OCI-LY7 (cell line): ENCODE measurements at regions of chr11 and their contacts with region 1.

Region 1: GRCh38 chr11:128624269-128625175 is 37.2 kb upstream of the ETS1 start:
- DNase-seq: peak; percentile 90
- H3K4me3 ChIP-seq: peak overlapping the region; percentile 46
- H3K27ac ChIP-seq: peak overlapping the region; percentile 97
- H3K4me1 ChIP-seq: peaks cover 100% of the 10 kb centered on the region
- CTCF ChIP-seq: no peak

Region 2: DNA sequence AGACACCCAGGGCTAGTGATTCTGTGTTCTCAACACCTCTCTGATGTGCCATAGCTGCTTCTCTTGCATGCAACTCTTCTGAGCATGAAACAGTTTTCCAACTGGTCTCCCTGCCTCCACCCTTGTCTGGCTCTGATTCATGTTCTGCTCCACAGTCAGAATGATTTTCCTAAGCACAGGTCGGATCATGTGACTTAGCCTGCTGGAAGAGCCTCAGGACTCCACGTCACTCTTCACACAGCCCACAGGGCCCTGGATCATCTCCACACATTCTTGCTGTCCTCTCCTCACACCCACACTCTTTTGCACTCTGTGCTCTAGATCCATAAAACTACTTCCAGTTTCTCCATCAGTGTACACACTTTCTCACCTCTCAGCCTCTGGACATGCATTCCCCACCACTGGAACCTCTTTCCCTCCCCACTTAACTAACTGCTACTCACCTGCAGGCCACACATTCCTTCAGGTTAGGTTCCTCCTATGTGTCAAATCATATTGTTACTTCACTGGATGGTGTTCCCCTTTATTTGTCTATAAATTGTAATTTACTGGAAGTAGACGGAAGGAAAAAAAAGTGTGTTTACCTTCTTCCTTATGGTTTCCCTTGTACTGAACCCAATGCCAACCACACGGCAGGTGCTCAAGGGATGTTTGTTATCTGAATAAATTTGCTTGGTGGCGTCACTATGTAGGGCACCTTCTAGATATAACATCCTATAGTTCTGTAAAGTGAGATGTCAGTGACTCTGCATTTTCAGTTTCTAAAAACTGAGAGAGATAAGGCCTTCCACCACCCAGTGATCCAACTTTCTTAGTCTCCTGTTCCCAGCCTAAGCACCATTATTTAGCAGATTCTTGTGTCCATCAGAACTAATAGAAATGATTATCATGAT is 170.8 kb before region 1 on chr11:
- CTCF ChIA-PET with region 1: no interaction called
- POLR2A ChIA-PET with region 1: no interaction called
- intact Hi-C with region 1: no loop called
- DNase-seq: no peak
- H3K4me3 ChIP-seq: no peak overlapping the region
- H3K27ac ChIP-seq: no peak overlapping the region
- H3K4me1 ChIP-seq: no peaks in the 10 kb centered on the region
- CTCF ChIP-seq: no peak

Region 3: DNA sequence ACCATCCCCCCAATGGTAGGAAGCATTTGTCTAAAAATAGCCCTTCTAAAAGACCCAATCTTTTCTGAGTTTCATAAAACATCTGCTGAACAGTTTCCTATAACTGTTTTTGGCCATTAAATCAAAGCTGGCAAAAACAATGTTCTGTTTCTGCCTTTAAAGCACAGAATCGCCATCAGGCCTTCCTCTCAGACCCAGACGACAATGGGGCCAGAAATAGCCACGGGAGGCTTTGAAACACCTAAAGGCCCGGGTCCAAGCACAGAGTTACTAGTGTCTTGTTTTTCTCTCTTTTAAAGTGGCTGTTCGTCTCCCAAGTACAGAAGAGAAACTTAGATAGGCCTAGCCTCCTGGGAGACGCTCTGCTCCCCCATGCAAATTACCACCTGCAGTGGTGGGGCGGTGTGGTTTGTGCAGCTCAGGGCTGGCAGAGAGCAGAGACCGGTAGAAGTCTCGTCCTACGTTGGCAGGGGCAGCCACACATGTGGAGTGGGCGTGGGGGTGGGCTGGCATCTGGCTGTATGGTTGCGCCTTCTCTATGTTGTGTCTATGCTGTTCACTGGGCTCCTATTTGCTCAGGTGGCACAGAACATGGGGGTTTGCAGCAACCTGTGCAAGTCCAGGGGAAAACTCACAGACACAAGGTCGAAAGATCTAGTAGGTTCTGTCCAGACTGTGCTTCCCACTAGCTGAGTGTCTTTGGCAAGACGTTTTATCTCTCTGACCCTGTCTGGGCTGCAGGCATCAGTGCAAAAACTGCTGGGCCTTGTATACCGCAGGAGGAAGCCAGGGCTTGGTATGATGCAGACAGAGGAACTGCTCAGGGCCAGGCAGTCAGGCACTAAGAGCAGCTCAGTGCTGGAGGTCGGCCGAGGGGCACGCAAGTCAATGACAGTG is 13.6 kb before region 1 on chr11:
- CTCF ChIA-PET with region 1: interaction called, 78 read pairs
- POLR2A ChIA-PET with region 1: interaction called, 631 read pairs
- intact Hi-C with region 1: loop called (anchors 1 kb)
- DNase-seq: peak; percentile 98
- H3K4me3 ChIP-seq: peak overlapping the region; percentile 45
- H3K27ac ChIP-seq: peak overlapping the region; percentile 99
- H3K4me1 ChIP-seq: peaks cover 93% of the 10 kb centered on the region
- CTCF ChIP-seq: no peak

Region 4: DNA sequence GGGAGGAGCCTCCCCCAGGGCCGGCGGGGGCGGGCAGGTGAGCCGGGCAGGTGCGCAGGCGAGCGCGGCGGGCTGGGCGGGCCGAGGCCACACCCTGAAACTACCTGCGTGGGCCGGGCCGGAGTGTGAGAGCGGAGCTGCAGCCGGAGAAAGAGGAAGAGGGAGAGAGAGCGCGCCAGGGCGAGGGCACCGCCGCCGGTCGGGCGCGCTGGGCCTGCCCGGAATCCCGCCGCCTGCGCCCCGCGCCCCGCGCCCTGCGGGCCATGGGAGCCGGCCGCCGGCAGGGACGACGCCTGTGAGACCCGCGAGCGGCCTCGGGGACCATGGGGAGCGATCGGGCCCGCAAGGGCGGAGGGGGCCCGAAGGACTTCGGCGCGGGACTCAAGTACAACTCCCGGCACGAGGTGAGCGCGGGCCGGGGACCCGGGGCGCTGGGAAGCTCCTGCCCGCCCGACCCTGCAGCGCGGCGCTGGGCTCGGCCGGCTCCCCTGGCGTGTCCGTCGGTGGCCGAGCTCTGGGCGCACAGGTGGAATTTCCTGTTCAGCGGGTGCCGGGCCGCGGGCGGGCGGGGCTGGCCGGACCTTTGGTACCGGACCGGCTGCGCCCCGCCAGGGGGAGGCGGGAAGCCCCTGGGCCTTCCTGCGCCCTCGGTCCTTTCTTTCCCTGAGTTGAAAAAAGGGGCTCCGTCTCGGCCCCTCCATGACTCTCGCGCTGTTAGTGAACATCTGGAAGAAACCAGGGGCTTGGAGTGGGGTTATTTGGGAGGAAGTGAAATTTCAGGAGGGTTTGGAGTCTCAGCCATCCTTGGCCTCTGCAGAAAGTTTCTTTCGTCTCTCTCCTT is 1535.4 kb after region 1 on chr11 and contains the start of gene ST14:
- CTCF ChIA-PET with region 1: no interaction called
- POLR2A ChIA-PET with region 1: no interaction called
- intact Hi-C with region 1: loop called (anchors 5 kb)
- DNase-seq: peak; percentile 70
- H3K4me3 ChIP-seq: peak within 1 kb of the TSS; percentile 74
- H3K27ac ChIP-seq: peak within 1 kb of the TSS; percentile 93
- H3K4me1 ChIP-seq: peaks cover 76% of the 10 kb centered on the region
- CTCF ChIP-seq: no peak; the same call in 1 of the 2 replicates
- total RNA-seq, gene ST14: 110 and 135 TPM in 2 replicates